Caco-2 (cell line): ENCODE measurements at regions of chr20 and their contacts with region 1.

Region 1: DNA sequence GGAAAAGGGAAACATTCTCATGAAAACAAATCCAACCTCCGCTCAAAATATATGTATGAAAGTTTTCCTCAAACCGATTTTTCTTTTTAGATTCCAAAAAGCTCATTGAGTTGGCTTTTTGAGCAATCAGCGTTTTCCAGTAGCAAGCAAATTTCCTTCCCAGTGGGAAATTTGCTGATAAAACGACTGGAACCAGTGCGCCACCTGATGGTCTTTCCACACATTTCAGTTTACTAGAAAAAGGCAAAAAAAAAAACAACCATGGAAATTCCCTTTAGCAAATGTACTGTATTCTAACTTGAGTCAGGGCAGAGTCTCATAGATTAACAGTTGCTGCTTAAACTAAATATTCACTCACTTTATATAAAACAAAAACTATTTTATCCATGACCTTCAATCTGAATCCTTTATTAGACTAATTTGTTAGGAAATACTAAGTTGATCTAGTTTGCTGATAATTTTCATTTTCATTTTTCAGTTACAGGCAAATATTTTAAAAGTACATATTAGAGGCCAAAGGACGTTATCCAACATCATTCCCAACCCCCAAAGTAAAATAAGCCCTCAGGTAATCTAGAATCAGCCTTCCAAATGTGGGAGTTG is 271.5 kb downstream of the FOXA2 start:
- DNase-seq: peak in 1 of 2 experiments; percentile 44
- H3K4me3 ChIP-seq: no peak overlapping the region
- H3K4me3 Mint-ChIP-seq: no peak overlapping the region
- H3K27ac Mint-ChIP-seq: no peak overlapping the region
- H3K4me1 ChIP-seq: no peaks in the 10 kb centered on the region
- H3K4me1 Mint-ChIP-seq: peaks cover 6% of the 10 kb centered on the region
- H3K27me3 ChIP-seq: no peaks in the 10 kb centered on the region
- H3K27me3 Mint-ChIP-seq: peaks cover 12% of the 10 kb centered on the region
- CTCF ChIP-seq: peak; percentile 66 to 73

Region 2: GRCh38 chr20:21808863-21809664 is 503.8 kb before region 1 on chr20:
- CTCF ChIA-PET with region 1: no interaction called
- POLR2A ChIA-PET with region 1: no interaction called
- intact Hi-C with region 1: loop called (anchors 10 kb)
- DNase-seq: peak; percentile 53 to 54
- H3K4me3 ChIP-seq: no peak overlapping the region
- H3K4me3 Mint-ChIP-seq: no peak overlapping the region
- H3K27ac Mint-ChIP-seq: no peak overlapping the region
- H3K4me1 ChIP-seq: no peaks in the 10 kb centered on the region
- H3K4me1 Mint-ChIP-seq: no peaks in the 10 kb centered on the region
- H3K27me3 ChIP-seq: no peaks in the 10 kb centered on the region
- H3K27me3 Mint-ChIP-seq: peaks cover 21% of the 10 kb centered on the region
- CTCF ChIP-seq: peak; percentile 60 to 88

Region 3: DNA sequence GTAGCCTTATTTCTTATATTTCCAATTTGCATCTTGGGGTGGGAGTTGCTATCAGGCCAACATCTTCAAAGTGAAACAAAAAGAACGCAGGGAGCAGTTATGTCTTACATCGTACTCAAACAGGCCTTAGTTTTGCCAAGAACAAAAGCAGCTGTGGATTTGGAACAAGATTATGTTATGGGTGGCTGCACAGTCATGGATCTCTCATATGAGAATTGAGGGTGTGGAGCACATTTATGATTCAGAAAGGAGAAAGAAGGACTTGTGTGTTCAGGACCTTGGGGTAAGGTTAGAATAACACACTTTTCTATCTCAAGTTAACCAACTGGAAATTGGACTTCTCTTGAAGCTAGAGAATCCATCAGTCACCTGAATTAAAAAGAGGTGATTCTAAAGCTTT is 11.7 kb after region 1 on chr20:
- CTCF ChIA-PET with region 1: interaction called, 10 read pairs
- POLR2A ChIA-PET with region 1: no interaction called
- intact Hi-C with region 1: no loop called
- DNase-seq: no peak
- H3K4me3 ChIP-seq: no peak overlapping the region
- H3K4me3 Mint-ChIP-seq: no peak overlapping the region
- H3K27ac Mint-ChIP-seq: no peak overlapping the region
- H3K4me1 ChIP-seq: no peaks in the 10 kb centered on the region
- H3K4me1 Mint-ChIP-seq: no peaks in the 10 kb centered on the region
- H3K27me3 ChIP-seq: no peaks in the 10 kb centered on the region; the same call in 1 of the 2 replicates
- H3K27me3 Mint-ChIP-seq: peaks cover 35% of the 10 kb centered on the region
- CTCF ChIP-seq: no peak

Region 4: DNA sequence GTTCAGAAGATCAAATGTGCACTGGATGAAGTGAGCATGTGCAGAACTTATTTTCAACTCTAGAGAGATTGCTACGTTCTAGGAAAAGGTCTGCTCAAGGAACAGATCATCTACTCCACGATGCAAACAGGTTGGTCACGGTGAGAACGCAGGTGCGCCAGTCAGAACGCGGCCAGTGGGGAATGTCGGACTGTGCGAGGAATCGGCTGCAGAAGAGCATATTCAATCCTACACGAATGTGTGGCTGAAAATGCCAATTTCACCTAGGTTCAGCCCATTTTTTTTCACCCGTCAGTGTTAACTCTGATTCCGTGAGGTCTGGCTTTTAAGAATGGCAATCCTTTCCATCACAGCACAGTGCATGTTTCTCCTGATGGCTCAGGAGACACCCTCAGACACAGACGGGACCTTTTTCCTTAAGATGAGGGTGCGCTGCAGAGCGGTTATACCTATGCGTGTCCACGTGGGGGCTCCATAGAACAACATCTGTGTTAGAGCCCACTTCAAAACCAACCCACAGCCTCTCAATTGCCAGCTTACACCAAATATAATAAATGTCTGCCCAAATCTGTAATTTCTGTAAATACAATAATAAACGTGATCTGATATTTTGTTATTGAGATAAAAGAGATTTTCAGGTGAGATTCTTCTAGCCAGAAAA is 21.2 kb after region 1 on chr20:
- CTCF ChIA-PET with region 1: no interaction called
- POLR2A ChIA-PET with region 1: no interaction called
- intact Hi-C with region 1: loop called (anchors 2 kb)
- DNase-seq: peak; percentile 69 to 78
- H3K4me3 ChIP-seq: no peak overlapping the region
- H3K4me3 Mint-ChIP-seq: no peak overlapping the region
- H3K27ac Mint-ChIP-seq: no peak overlapping the region
- H3K4me1 ChIP-seq: no peaks in the 10 kb centered on the region; the same call in 1 of the 2 replicates
- H3K4me1 Mint-ChIP-seq: peaks cover 2% of the 10 kb centered on the region
- H3K27me3 ChIP-seq: peaks cover 1% of the 10 kb centered on the region; the same call in 1 of the 2 replicates
- H3K27me3 Mint-ChIP-seq: peaks cover 28% of the 10 kb centered on the region
- CTCF ChIP-seq: peak; percentile 84 to 86